K562 (cell line): ENCODE measurements at regions of chr5 and their contacts with region 1.

Region 1: DNA sequence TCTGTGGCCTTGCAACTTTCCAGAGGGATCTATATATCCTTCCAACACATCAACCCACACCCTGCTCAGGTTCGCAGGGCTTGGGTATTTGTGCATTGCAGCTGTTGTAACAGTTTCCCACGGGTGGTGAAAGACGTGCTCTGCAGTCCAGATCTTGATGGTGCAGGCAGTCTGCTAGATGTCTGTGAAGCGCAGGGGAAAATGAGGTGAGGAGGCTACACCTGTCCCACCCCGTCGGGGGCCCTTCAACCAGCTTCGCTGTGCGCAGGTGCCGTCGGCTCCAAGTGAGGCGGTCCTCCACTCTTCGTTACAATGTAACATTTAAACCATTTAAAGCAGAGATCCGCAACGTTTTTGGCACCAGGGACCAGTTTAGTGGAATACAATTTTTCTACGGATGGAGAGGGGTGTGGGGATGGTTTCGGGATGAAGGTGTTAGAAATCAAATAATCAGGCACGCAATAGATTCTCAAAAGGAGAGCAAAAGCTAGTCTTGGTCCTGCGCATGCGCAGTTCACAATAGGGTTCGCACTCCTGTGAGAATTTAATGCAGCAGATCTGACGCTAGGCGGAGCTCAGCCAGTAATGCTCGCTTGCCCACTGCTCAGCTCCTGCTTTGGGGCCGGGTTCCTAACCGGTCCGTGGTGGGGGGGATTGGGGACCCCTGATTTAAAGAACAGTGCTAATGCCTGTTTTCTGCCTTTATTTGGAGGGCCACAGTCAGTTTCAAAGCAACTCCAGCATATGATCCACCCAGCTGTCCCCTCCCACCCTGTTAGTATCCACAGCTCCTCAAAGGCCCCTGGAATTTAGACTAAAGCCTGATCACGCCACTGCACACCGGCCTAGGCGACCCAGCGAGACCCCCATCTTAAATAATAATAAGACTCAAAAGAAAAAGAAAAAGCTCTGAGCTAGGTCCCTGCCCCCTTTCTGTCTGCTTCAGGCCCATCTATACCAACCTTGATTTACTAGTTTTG is 97.1 kb upstream of the SELENOP start:
- DNase-seq: peak; percentile 85 to 96 (median 88)
- ATAC-seq: peak; percentile 95
- H3K4me3 ChIP-seq: peak overlapping the region; percentile 31
- H3K27ac ChIP-seq: no peak overlapping the region
- H3K4me1 ChIP-seq: peaks cover 3 to 6% of the 10 kb centered on the region in 2 experiments; a peak in 2 of 5 replicates
- H3K27me3 ChIP-seq: peaks cover 3 to 7% of the 10 kb centered on the region in 2 experiments; a peak in 3 of 5 replicates
- CTCF ChIP-seq: peak; percentile 90 to 97 (median 92)
- EP300 ChIP-seq: no peak; the same call in 1 of the 2 replicates
- POLR2A ChIP-seq: no peak
- RAD21 ChIP-seq: peak; percentile 82 to 91

Region 2: DNA sequence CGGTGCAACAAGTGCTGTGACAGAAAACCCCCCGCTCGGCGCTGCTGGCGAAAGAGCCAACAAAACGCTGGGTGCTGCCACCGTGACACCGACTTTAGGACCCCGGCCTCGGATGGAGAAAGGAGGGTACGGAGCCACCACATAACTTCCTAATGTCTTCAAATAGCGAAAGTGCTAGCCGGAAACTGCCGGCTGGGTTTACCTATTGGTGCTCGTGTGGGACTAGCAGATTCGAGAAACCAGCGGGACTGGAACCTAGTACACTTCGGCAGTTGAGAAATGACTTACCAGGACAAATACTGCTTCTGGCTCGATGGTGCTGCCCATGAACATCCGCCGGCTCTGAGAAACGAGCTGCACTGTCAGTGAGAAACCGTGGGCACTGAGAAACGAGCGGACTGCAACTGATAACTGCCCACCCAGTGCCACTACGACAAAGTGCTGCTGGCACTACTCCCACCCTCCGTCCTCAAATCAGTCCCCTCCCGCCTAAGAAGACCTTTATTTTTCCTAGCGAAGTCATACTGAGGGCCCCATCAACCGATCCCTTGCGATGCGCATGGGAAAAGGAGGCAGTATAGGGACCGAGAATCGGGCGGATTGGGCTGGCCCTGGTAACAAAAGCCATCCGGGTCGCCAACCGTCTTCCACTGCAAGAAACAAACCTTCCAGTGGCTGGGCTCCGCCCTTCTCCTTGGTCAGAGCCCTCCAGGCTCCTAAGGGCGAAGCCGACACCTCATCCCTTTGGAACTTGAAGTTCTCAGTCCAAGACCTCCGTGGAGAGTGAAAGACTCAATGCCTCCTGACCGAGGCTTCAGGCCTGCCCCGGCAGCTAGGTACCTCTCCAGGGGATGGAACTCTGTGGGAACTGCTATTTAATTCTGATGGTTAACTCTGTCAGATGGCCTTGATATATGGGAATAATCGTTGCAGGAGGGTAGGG is 158.3 kb after region 1 on chr5:
- CTCF ChIA-PET with region 1: interaction called, 7 read pairs
- POLR2A ChIA-PET with region 1: interaction called, 5 read pairs
- in situ Hi-C with region 1: no loop called
- intact Hi-C with region 1: loop called (anchors 1 kb)
- DNase-seq: peak; percentile 45 to 95 (median 58)
- ATAC-seq: peak; percentile 60
- H3K4me3 ChIP-seq: peak overlapping the region; percentile 80
- H3K27ac ChIP-seq: peak overlapping the region; percentile 97
- H3K4me1 ChIP-seq: peaks cover 14 to 25% of the 10 kb centered on the region in 2 experiments
- H3K27me3 ChIP-seq: no peaks in the 10 kb centered on the region; a peak in 1 of 5 replicates
- CTCF ChIP-seq: 0 out of 6 replicates have a peak, but pooled peaks of 1 of the 3 experiments have one; percentile 2
- EP300 ChIP-seq: peak; percentile 100
- POLR2A ChIP-seq: peak; percentile 78
- RAD21 ChIP-seq: no peak